ENCODE measurements at regions of chr18 and their contacts with region 1.

Region 1: GRCh38 chr18:63410792-63411191 is 11.5 kb downstream of the VPS4B start:
- DNase-seq: no peak
- ATAC-seq: no peak
- H3K4me3 ChIP-seq: no peak overlapping the region
- H3K4me3 Mint-ChIP-seq: peak overlapping the region in 1 of 10 donors; percentile 30
- H3K27ac ChIP-seq: no peak overlapping the region
- H3K27ac Mint-ChIP-seq: peak overlapping the region in 4 of 9 donors; percentile 5 to 68 (median 52)
- H3K4me1 ChIP-seq: peaks cover 9% of the 10 kb centered on the region in 2 donors
- H3K4me1 Mint-ChIP-seq: peaks cover 19 to 70% (median 51%) of the 10 kb centered on the region in 7 donors
- H3K27me3 ChIP-seq: no peaks in the 10 kb centered on the region
- H3K27me3 Mint-ChIP-seq: no peaks in the 10 kb centered on the region

Region 2: DNA sequence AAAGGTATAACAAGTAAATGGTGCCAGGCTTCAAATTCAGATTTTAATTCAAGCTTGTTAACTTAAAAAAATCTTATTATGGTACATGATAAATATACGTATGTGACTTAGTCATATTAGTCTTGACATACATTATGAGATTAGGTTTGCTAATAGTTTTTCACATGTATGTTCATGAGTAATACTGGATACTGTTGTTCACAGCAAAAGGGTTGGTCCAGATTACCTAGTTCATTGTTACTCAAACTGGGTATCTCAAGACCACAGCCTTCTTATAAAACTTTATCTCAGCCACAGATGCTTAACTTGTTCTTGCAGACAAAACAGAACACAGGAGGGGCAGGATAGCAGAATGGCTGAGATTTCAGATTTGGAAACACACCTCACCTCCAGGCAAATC is 15.3 kb before region 1 on chr18:
- CTCF ChIA-PET with region 1: no interaction called
- POLR2A ChIA-PET with region 1: no interaction called
- intact Hi-C with region 1: loop called in 1 of 2 experiments (anchors 2 kb)
- DNase-seq: no peak
- ATAC-seq: no peak
- H3K4me3 ChIP-seq: no peak overlapping the region
- H3K4me3 Mint-ChIP-seq: no peak overlapping the region
- H3K27ac ChIP-seq: no peak overlapping the region
- H3K27ac Mint-ChIP-seq: no peak overlapping the region
- H3K4me1 ChIP-seq: no peaks in the 10 kb centered on the region
- H3K4me1 Mint-ChIP-seq: peaks cover 0 to 8% (median 4%) of the 10 kb centered on the region in 7 donors
- H3K27me3 ChIP-seq: no peaks in the 10 kb centered on the region
- H3K27me3 Mint-ChIP-seq: no peaks in the 10 kb centered on the region

Region 3: DNA sequence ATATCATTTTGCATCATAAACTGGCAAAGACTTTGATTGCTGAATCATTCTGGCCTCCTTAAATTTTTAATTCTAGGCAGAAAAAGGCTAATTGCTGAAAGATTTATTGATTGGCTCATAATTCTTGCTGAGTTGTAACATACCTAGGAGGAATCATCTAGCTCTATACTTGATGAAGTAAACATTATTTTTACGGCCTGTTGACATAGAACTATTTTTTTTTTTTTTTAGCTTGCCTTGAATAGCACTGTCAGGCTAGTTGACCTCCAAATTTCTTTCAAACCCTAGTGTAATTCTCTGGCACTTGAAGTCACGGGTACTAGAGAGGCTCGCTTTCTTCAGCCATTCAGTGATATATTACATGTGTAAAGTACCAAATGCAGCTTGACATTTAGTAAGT is 134.2 kb after region 1 on chr18:
- CTCF ChIA-PET with region 1: no interaction called
- POLR2A ChIA-PET with region 1: no interaction called
- intact Hi-C with region 1: no loop called
- DNase-seq: no peak
- ATAC-seq: no peak
- H3K4me3 ChIP-seq: no peak overlapping the region
- H3K4me3 Mint-ChIP-seq: no peak overlapping the region
- H3K27ac ChIP-seq: no peak overlapping the region
- H3K27ac Mint-ChIP-seq: no peak overlapping the region
- H3K4me1 ChIP-seq: no peaks in the 10 kb centered on the region
- H3K4me1 Mint-ChIP-seq: peaks cover 0 to 1% (median 0%) of the 10 kb centered on the region in 7 donors
- H3K27me3 ChIP-seq: no peaks in the 10 kb centered on the region
- H3K27me3 Mint-ChIP-seq: peaks cover 18 to 47% (median 26%) of the 10 kb centered on the region in 5 donors

Measured in naive thymus-derived CD4-positive, alpha-beta T cell (primary cell).